ENCODE measurements at regions of chr16 and their contacts with region 1.

Region 1: GRCh38 chr16:16033208-16033717 is 83.8 kb downstream of the ABCC1 start:
- DNase-seq: no peak
- H3K4me3 ChIP-seq: no peak overlapping the region
- H3K27ac ChIP-seq: peak overlapping the region in 1 of 3 donors; percentile 95
- H3K4me1 ChIP-seq: peaks cover 29 to 34% of the 10 kb centered on the region in 2 donors
- H3K27me3 ChIP-seq: no peaks in the 10 kb centered on the region
- CTCF ChIP-seq: no peak
- POLR2A ChIP-seq: no peak

Region 2: GRCh38 chr16:16083421-16084156 is 50.3 kb after region 1 on chr16:
- intact Hi-C with region 1: loop called (anchors 10 kb)
- DNase-seq: no peak
- H3K4me3 ChIP-seq: no peak overlapping the region
- H3K27ac ChIP-seq: peak overlapping the region in 1 of 3 donors; percentile 25
- H3K4me1 ChIP-seq: peaks cover 22 to 27% of the 10 kb centered on the region in 2 donors
- H3K27me3 ChIP-seq: no peaks in the 10 kb centered on the region
- CTCF ChIP-seq: no peak
- POLR2A ChIP-seq: no peak

Region 3: DNA sequence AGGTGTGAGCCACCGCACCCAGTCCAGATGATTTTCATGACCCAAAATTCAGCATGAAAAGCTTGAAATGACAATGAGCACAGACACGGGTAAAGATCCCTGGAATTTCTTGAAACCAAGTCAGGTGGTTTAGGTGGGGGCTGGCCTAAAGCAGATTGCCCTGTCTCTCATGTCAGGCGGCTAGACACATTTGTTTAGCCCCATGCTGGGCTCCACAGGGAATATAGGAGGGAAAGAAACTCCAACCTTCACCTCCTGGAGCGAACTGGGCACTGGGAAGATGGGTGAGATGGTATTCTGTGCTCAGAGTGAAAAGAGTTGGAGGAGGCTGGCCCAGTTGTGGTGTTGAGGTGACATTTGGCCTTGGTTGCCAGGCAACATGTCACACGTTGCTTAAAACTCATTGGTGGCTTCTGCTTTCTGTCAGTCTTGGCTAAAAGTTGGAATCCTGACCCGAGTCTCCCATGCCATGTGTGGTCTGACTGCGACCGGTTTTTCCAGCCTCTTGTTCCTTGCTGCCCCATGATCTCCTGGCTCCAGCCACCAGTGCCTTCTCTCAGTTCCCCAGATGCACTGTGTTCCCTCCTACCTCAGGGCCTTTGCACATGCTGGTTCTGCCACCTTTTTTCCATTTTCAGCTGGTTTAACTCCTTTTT is 76.3 kb after region 1 on chr16:
- intact Hi-C with region 1: no loop called
- DNase-seq: peak in 1 of 2 donors; percentile 40
- H3K4me3 ChIP-seq: no peak overlapping the region
- H3K27ac ChIP-seq: peak overlapping the region; percentile 51 to 83 (median 74)
- H3K4me1 ChIP-seq: peaks cover 16 to 20% of the 10 kb centered on the region in 2 donors
- H3K27me3 ChIP-seq: no peaks in the 10 kb centered on the region
- CTCF ChIP-seq: peak in 1 of 6 experiments; percentile 41
- POLR2A ChIP-seq: no peak